ENCODE measurements at regions of chr16 and their contacts with region 1.

Region 1: GRCh38 chr16:57984331-57985203 is 13.6 kb upstream of the CNGB1 start:
- DNase-seq: peak; percentile 99
- ATAC-seq: peak; percentile 97
- H3K4me3 Mint-ChIP-seq: peak overlapping the region; percentile 86
- H3K27ac Mint-ChIP-seq: no peak overlapping the region
- H3K4me1 Mint-ChIP-seq: peaks cover 9% of the 10 kb centered on the region
- H3K27me3 Mint-ChIP-seq: peaks cover 48% of the 10 kb centered on the region
- CTCF ChIP-seq: no peak

Region 2: GRCh38 chr16:57914240-57915173 is 70.1 kb before region 1 on chr16:
- CTCF ChIA-PET with region 1: no interaction called
- POLR2A ChIA-PET with region 1: no interaction called
- DNase-seq: no peak
- ATAC-seq: no peak
- H3K4me3 Mint-ChIP-seq: no peak overlapping the region
- H3K27ac Mint-ChIP-seq: no peak overlapping the region
- H3K4me1 Mint-ChIP-seq: peaks cover 18% of the 10 kb centered on the region
- H3K27me3 Mint-ChIP-seq: no peaks in the 10 kb centered on the region; the same call in 1 of the 2 replicates
- CTCF ChIP-seq: no peak

Region 3: GRCh38 chr16:58000706-58001676 is 16.4 kb after region 1 on chr16 and contains the start of gene USB1:
- CTCF ChIA-PET with region 1: interaction called, 20 read pairs
- POLR2A ChIA-PET with region 1: no interaction called
- DNase-seq: peak; percentile 87
- ATAC-seq: peak; percentile 85
- H3K4me3 Mint-ChIP-seq: peak within 1 kb of the TSS; percentile 83
- H3K27ac Mint-ChIP-seq: peak within 1 kb of the TSS; percentile 70
- H3K4me1 Mint-ChIP-seq: peaks cover 23% of the 10 kb centered on the region
- H3K27me3 Mint-ChIP-seq: no peaks in the 10 kb centered on the region
- CTCF ChIP-seq: no peak; the same call in 1 of the 2 replicates
- total RNA-seq, gene USB1: 67.1 to 75.2 TPM (median 69.6 TPM) in 3 replicates

Region 4: DNA sequence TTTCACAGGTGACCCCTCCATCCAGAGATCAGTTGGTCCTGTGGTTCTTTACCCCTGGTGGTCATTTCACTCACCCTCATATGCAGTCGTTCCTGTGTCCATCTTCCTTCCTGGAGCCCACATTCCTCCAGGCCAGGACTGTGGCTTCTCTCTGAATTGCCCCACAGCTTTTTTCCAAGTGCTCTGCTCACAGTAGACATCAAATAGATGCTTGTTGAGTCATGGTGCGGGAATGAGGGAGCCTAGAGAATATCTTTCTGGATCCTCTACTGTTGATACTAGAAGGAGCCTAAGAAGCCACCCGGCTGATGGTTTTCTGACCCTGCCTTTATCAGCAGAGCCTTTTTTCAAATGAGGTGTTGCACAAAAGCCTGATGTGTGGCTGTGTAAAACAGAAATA is 27.1 kb after region 1 on chr16:
- CTCF ChIA-PET with region 1: no interaction called
- POLR2A ChIA-PET with region 1: no interaction called
- DNase-seq: no peak
- ATAC-seq: no peak
- H3K4me3 Mint-ChIP-seq: no peak overlapping the region
- H3K27ac Mint-ChIP-seq: no peak overlapping the region
- H3K4me1 Mint-ChIP-seq: peaks cover 13% of the 10 kb centered on the region
- H3K27me3 Mint-ChIP-seq: no peaks in the 10 kb centered on the region
- CTCF ChIP-seq: no peak

Region 5: GRCh38 chr16:58515125-58515870 is 530.7 kb after region 1 on chr16 and contains the start of gene SETD6:
- CTCF ChIA-PET with region 1: no interaction called
- POLR2A ChIA-PET with region 1: no interaction called
- DNase-seq: peak; percentile 84
- ATAC-seq: peak; percentile 60
- H3K4me3 Mint-ChIP-seq: peak within 1 kb of the TSS; percentile 88
- H3K27ac Mint-ChIP-seq: peak within 1 kb of the TSS; percentile 87
- H3K4me1 Mint-ChIP-seq: peaks cover 29% of the 10 kb centered on the region
- H3K27me3 Mint-ChIP-seq: no peaks in the 10 kb centered on the region
- CTCF ChIP-seq: no peak
- total RNA-seq, gene SETD6: 34.0 to 41.1 TPM (median 35.0 TPM) in 3 replicates